ENCODE measurements at regions of chr10 and their contacts with region 1.

Region 1: GRCh38 chr10:12782537-12782936 is 219.0 kb downstream of the CCDC3 start:
- DNase-seq: peak; percentile 6
- H3K4me3 ChIP-seq: no peak overlapping the region
- H3K27ac ChIP-seq: no peak overlapping the region
- H3K4me1 ChIP-seq: no peaks in the 10 kb centered on the region
- H3K27me3 ChIP-seq: no peaks in the 10 kb centered on the region
- CTCF ChIP-seq: peak; percentile 53 to 67

Region 2: GRCh38 chr10:12720217-12720981 is 62.1 kb before region 1 on chr10:
- CTCF ChIA-PET with region 1: no interaction called
- dilution Hi-C with region 1: loop called (anchors 5 kb)
- in situ Hi-C with region 1: no loop called
- intact Hi-C with region 1: loop called (anchors 5 kb)
- DNase-seq: peak; percentile 97
- H3K4me3 ChIP-seq: no peak overlapping the region
- H3K27ac ChIP-seq: peak overlapping the region; percentile 36
- H3K4me1 ChIP-seq: peaks cover 40% of the 10 kb centered on the region
- H3K27me3 ChIP-seq: no peaks in the 10 kb centered on the region
- CTCF ChIP-seq: no peak

Region 3: GRCh38 chr10:12869427-12869826 is 86.9 kb after region 1 on chr10:
- CTCF ChIA-PET with region 1: no interaction called
- dilution Hi-C with region 1: no loop called
- in situ Hi-C with region 1: no loop called
- intact Hi-C with region 1: no loop called
- DNase-seq: no peak
- H3K4me3 ChIP-seq: no peak overlapping the region
- H3K27ac ChIP-seq: no peak overlapping the region
- H3K4me1 ChIP-seq: no peaks in the 10 kb centered on the region
- H3K27me3 ChIP-seq: no peaks in the 10 kb centered on the region
- CTCF ChIP-seq: no peak

Measured in mammary epithelial cell (primary cell).